AG04449 (cell line): ENCODE measurements at regions of chr4 and their contacts with region 1.

Region 1: DNA sequence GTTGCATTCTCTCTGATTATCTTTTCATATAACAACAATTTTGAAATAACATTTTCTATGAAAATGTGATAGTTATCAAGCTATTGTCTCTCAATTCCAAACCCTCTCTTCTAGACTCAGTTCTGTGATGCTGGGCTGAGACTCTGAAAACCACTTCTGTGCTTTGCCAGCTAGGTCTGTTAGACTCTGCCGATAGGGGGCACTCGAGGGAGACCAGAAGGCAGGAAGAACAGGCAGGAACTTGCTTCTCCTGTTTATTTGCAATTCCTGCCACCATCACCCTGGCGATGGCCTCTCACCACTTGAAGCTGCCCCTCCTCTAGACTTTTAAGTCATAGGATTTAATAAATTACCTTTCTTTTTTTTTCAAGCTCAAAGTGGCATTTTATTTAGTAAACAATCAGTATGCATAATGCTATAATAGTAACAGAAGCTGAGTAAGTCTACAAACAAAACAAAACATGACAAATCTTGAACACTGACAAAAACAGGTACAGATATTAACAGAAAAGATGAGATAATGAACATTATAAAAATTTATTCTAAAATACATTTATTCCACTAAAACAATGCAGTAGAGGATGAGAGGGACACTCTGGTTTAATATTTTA is 49.7 kb downstream of the RASL11B start:
- DNase-seq: no peak
- H3K4me3 ChIP-seq: no peak overlapping the region
- CTCF ChIP-seq: peak; percentile 65

Region 2: DNA sequence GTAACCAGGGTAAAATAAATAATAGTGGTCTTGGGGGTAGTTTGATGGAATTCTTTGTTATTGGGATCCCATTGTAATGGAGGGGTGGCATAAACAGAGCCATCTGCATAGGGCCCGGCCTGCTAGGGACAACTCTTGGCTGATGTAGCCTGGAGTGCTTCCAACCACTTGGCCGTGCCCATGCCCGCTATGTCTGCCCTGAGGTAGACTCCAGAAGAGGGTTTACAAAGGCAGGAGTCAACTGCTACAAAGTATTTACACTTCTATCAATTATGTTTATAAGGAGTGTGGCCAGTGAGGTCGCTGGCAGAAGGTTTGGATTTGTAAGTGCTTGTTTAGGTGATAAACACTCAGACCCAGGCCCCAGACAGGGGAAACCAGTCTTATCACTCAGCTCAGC is 41.6 kb before region 1 on chr4:
- CTCF ChIA-PET with region 1: no interaction called
- POLR2A ChIA-PET with region 1: no interaction called
- DNase-seq: no peak
- H3K4me3 ChIP-seq: no peak overlapping the region
- CTCF ChIP-seq: no peak

Region 3: DNA sequence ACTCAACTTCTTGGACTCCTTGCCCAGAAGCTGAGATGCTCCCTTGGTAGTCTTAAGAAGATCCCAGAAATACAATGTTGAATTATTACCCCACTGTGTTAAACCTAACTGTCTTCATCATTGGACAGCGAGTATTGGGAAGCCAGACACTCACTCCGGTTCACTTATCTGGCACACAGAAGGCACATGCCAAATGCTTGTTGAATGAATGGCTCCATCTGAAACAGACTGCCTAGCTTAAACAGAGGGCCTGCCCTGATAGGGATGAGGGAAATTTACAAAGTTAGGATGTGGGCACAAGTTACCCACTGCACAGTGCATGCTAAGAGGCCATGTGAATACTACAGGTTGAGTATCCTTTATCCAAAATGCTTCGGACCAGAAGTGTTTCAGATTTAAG is 29.7 kb after region 1 on chr4:
- CTCF ChIA-PET with region 1: interaction called, 10 read pairs
- POLR2A ChIA-PET with region 1: no interaction called
- DNase-seq: no peak
- H3K4me3 ChIP-seq: no peak overlapping the region
- CTCF ChIP-seq: no peak

Region 4: DNA sequence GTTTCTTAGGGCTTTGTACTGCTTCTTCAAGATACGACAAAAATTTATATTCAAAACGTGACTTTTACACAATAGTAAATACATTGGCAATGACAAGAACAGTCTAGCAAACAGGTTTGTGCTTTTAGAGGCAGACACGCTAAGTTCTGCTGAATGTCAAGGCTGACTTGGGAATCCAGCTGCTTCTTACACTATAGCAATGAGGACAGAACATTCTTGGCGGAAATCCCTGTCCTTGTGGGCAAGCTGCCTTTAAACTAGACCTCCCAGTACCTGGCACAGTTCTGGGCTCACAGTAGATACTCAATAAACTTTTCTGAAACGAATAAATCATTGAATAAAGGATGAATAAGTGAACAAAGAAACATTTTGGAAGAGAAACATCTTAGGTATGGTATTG is 98.5 kb after region 1 on chr4:
- CTCF ChIA-PET with region 1: no interaction called
- POLR2A ChIA-PET with region 1: no interaction called
- DNase-seq: no peak
- H3K4me3 ChIP-seq: no peak overlapping the region
- CTCF ChIP-seq: no peak